ENCODE measurements at regions of chr20 and their contacts with region 1.

Region 1: DNA sequence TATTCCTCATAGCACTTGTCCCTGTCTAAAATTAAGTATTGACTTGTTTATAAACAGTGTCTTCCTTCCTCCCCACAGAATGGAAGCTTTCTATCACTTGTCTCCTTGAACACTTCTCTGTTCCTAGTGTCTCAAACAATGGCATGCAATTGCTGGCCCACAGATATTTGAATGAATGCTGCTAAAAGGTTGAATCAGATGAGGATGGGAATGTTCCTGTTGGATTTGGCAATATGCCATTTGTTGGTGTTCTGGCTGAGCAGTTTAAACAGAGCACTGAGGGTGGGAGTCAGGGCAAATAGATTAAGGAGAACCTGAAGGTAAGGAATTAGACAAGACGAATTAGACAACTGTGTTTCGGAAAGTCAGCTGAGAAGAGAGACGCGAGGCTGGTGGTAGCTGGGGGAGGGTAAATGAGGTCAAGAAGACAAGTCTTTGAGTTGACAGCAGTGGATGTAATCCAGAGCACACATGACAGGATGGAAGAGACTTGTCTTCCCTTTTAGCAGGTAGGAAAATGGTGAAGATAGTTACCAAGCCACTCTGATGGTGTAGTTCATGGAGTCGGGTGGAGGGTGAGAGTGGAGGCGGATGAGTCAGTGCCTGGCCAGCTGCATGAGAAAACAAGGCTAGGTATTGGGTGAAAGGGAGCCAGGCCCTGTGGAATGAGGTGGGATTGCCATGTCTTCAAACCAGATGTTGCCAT is 58.3 kb upstream of the GNRH2 start:
- DNase-seq: no peak
- H3K4me3 Mint-ChIP-seq: no peak overlapping the region
- H3K27ac Mint-ChIP-seq: no peak overlapping the region
- H3K4me1 Mint-ChIP-seq: peaks cover 37% of the 10 kb centered on the region
- H3K27me3 Mint-ChIP-seq: no peaks in the 10 kb centered on the region

Region 2: GRCh38 chr20:2206957-2207769 is 777.9 kb before region 1 on chr20:
- intact Hi-C with region 1: no loop called
- DNase-seq: peak; percentile 88
- H3K4me3 Mint-ChIP-seq: peak overlapping the region; percentile 81
- H3K27ac Mint-ChIP-seq: peak overlapping the region; percentile 83
- H3K4me1 Mint-ChIP-seq: peaks cover 5% of the 10 kb centered on the region
- H3K27me3 Mint-ChIP-seq: peaks cover 18% of the 10 kb centered on the region

Region 3: DNA sequence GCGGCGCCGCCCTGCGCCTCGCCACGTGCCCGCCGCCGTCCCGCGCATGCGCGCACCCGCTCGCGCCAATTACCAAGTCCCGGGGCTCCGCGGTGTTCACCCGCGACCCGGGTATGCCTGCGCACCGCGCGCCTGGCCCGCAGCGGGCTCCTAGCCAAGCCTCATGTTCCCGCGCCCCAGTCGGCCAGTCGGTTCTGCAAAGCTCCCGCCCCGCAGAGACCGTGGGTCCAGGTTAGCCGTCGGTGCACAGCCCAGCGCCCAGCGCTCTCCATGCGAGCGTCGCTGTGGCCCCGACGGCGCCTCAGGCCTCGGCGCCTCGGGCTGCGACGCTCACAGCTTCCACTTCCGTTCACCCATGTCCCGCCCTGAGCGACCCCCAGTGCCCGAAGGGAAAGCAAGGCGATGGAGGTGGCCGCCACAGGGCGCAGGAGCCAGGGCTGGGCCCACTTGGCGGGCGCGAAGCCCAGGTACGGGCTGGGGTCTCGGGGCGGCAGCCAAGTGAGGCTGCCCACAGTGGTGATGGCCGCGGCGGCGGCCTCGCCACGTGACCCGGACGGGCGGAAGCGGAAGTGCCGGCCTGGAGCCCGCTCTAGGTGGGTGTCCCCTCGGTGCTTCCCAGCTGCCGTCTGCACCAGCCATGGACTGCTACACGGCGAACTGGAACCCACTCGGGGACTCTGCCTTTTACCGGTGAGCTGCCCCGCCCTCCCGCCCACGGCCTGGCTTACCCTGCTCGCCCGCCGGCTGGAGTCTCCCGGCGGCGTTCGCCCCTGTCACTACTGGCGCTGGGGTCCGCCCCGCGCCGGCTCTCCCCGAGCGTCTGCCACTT is 144.8 kb before region 1 on chr20 and contains the starts of genes PCED1A and VPS16:
- intact Hi-C with region 1: no loop called
- DNase-seq: peak; percentile 97
- H3K4me3 Mint-ChIP-seq: peak within 1 kb of the TSS; percentile 91
- H3K27ac Mint-ChIP-seq: peak within 1 kb of the TSS; percentile 91
- H3K4me1 Mint-ChIP-seq: peaks cover 20% of the 10 kb centered on the region
- H3K27me3 Mint-ChIP-seq: peaks cover 1% of the 10 kb centered on the region
- total RNA-seq, gene PCED1A: 23.4 and 26.1 TPM in 2 replicates
- total RNA-seq, gene VPS16: 44.3 and 44.9 TPM in 2 replicates

Region 4: GRCh38 chr20:2914160-2914559 is 70.9 kb before region 1 on chr20:
- intact Hi-C with region 1: loop called (anchors 1 kb)
- DNase-seq: no peak
- H3K4me3 Mint-ChIP-seq: no peak overlapping the region
- H3K27ac Mint-ChIP-seq: no peak overlapping the region
- H3K4me1 Mint-ChIP-seq: peaks cover 6% of the 10 kb centered on the region
- H3K27me3 Mint-ChIP-seq: no peaks in the 10 kb centered on the region

Region 5: DNA sequence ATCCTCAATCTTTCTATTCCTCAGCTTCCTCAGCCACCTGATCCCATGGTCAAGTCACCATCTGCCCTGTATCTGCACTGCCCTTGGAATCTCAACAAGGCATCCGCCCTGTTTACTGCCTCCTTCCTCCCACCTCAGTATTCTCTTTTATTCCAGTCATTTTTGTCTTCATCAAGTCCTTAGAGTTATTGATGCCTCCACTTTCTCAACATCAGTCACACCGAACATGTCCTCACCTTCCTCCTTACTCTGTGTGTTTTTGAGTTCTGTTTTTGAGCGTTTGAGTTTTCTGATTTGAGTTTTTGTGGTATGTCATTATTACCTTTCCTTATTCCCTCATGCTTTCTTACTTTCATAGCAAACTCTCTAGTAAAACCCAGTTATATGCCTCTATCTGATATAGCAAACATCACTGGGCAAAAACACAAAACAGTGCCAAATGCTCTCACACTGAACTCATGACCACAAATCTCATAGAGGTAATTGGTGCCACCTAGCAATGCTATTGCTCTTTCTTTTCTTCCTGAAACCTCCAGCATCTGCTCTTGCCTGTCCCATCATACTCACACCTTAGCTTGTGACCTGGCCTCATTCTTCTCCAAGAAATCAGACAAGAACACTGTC is 46.5 kb after region 1 on chr20:
- intact Hi-C with region 1: loop called (anchors 1 kb)
- DNase-seq: no peak
- H3K4me3 Mint-ChIP-seq: no peak overlapping the region
- H3K27ac Mint-ChIP-seq: no peak overlapping the region
- H3K4me1 Mint-ChIP-seq: peaks cover 6% of the 10 kb centered on the region
- H3K27me3 Mint-ChIP-seq: no peaks in the 10 kb centered on the region

Region 6: GRCh38 chr20:3045816-3046676 is 60.9 kb after region 1 on chr20 and contains the start of gene MRPS26:
- intact Hi-C with region 1: loop called (anchors 2 kb)
- DNase-seq: peak; percentile 96
- H3K4me3 Mint-ChIP-seq: peak within 1 kb of the TSS; percentile 93
- H3K27ac Mint-ChIP-seq: peak within 1 kb of the TSS; percentile 87
- H3K4me1 Mint-ChIP-seq: peaks cover 16% of the 10 kb centered on the region
- H3K27me3 Mint-ChIP-seq: no peaks in the 10 kb centered on the region
- total RNA-seq, gene MRPS26: 123 and 130 TPM in 2 replicates

Region 7: GRCh38 chr20:3307078-3307477 is 322.0 kb after region 1 on chr20:
- intact Hi-C with region 1: no loop called
- DNase-seq: no peak
- H3K4me3 Mint-ChIP-seq: no peak overlapping the region
- H3K27ac Mint-ChIP-seq: no peak overlapping the region
- H3K4me1 Mint-ChIP-seq: peaks cover 2% of the 10 kb centered on the region
- H3K27me3 Mint-ChIP-seq: no peaks in the 10 kb centered on the region

Measured in activated CD4-positive, alpha-beta T cell treated with anti-CD3 and anti-CD28 coated beads, Interleukin-2, amount 10 ng/mL, durations not matched to agents 24 days and 14 days (primary cell).